Calu3 (cell line): ENCODE measurements at regions of chrX and their contacts with region 1.

Region 1: DNA sequence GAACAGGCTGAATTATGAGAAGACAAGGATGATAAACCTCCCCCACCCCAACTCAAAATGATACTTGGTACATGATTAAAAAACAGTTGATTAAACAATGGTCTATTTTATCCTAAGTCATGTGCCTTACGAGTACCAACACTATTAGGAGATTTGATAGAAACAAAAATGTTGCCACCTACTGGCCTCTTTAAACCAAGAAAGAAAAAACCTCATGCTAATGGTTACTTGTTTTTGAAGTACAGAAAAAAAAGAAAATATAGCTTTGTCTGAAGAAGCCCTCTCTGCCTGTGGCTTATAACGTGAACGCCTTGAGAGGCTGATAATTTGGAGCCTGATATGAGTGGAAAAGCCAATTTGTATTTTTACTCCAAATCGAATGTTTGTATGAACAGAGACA is 538.2 kb downstream of the DMD start:
- DNase-seq: no peak
- H3K4me3 Mint-ChIP-seq: no peak overlapping the region
- H3K27ac Mint-ChIP-seq: no peak overlapping the region
- H3K4me1 Mint-ChIP-seq: no peaks in the 10 kb centered on the region
- H3K27me3 Mint-ChIP-seq: no peaks in the 10 kb centered on the region
- CTCF ChIP-seq: no peak

Region 2: GRCh38 chrX:32408389-32408788 is 264.8 kb before region 1 on chrX:
- CTCF ChIA-PET with region 1: no interaction called
- intact Hi-C with region 1: loop called (anchors 10 kb)
- DNase-seq: peak; percentile 20
- H3K4me3 Mint-ChIP-seq: no peak overlapping the region
- H3K27ac Mint-ChIP-seq: no peak overlapping the region
- H3K4me1 Mint-ChIP-seq: no peaks in the 10 kb centered on the region
- H3K27me3 Mint-ChIP-seq: no peaks in the 10 kb centered on the region
- CTCF ChIP-seq: no peak

Region 3: GRCh38 chrX:32483534-32484136 is 189.6 kb before region 1 on chrX:
- CTCF ChIA-PET with region 1: no interaction called
- intact Hi-C with region 1: loop called (anchors 5 kb)
- DNase-seq: no peak
- H3K4me3 Mint-ChIP-seq: no peak overlapping the region
- H3K27ac Mint-ChIP-seq: no peak overlapping the region
- H3K4me1 Mint-ChIP-seq: no peaks in the 10 kb centered on the region
- H3K27me3 Mint-ChIP-seq: no peaks in the 10 kb centered on the region
- CTCF ChIP-seq: no peak

Region 4: GRCh38 chrX:32495855-32496254 is 177.3 kb before region 1 on chrX:
- CTCF ChIA-PET with region 1: no interaction called
- intact Hi-C with region 1: no loop called
- DNase-seq: no peak
- H3K4me3 Mint-ChIP-seq: no peak overlapping the region
- H3K27ac Mint-ChIP-seq: no peak overlapping the region
- H3K4me1 Mint-ChIP-seq: no peaks in the 10 kb centered on the region
- H3K27me3 Mint-ChIP-seq: no peaks in the 10 kb centered on the region
- CTCF ChIP-seq: no peak

Region 5: GRCh38 chrX:32530802-32531403 is 142.3 kb before region 1 on chrX:
- CTCF ChIA-PET with region 1: no interaction called
- intact Hi-C with region 1: loop called (anchors 2 kb)
- DNase-seq: peak; percentile 13
- H3K4me3 Mint-ChIP-seq: no peak overlapping the region
- H3K27ac Mint-ChIP-seq: no peak overlapping the region
- H3K4me1 Mint-ChIP-seq: no peaks in the 10 kb centered on the region
- H3K27me3 Mint-ChIP-seq: no peaks in the 10 kb centered on the region
- CTCF ChIP-seq: peak; percentile 43

Region 6: DNA sequence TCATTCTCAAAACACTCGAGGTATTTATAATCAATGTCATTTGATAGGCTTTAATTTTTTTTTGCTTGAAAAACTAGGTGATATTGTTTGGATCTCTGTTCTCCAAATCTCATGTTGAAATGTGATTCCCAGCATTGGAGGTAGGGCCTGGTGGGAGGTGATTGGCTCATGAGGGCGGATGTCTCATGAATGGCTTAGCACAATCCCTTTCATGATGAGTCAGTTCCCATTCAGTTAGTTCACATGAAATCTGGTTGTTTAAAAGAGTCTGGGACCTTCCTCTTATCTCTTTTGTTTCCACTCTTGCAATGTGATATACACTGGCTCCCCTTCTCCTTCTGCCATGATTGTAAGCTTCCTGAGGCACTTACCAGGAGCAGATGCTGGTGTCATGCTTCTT is 100.5 kb before region 1 on chrX:
- CTCF ChIA-PET with region 1: no interaction called
- intact Hi-C with region 1: no loop called
- DNase-seq: no peak
- H3K4me3 Mint-ChIP-seq: no peak overlapping the region
- H3K27ac Mint-ChIP-seq: no peak overlapping the region
- H3K4me1 Mint-ChIP-seq: no peaks in the 10 kb centered on the region
- H3K27me3 Mint-ChIP-seq: no peaks in the 10 kb centered on the region
- CTCF ChIP-seq: no peak